Endothelial cell of umbilical vein (primary cell): ENCODE measurements at regions of chr6 and their contacts with region 1.

Region 1: DNA sequence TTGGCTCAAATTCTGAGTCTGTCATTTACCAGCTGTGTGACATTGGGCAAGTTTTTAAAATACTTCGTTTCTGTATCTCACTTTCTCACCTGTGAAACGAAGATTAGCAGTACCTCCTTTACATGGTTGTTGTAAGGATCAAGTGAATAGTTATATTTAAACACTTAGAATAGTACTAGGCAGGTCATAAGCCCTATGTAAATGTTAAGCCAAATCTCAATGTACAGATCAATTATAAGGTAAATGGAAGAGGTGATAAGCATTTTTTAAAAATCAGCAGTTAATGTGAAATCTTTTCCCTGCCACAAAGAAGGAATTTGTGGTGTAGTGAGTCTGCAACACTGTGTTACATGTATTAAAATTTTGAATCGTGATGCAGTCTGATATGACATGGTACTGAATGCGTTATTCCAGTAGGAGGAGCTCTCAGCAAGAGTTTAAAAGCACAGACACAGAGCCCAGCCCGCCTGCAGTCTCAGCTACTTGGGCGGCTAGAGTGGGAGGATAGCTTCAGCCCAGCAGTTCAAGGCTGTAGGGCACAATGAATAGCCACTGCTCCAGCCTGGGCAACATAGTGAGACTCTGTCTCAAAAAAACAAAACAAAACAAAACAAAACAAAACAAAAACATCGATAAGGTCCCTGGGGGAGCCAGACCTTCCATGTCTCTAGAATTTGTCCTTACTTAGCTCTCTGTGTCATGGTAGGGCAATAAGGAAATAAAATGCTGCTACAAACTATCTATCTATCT is 46.0 kb downstream of the GTF2H5 start:
- DNase-seq: peak; percentile 80
- H3K4me3 ChIP-seq: no peak overlapping the region
- H3K27ac ChIP-seq: no peak overlapping the region
- H3K4me1 ChIP-seq: peaks cover 8% of the 10 kb centered on the region
- H3K27me3 ChIP-seq: no peaks in the 10 kb centered on the region
- CTCF ChIP-seq: peak; percentile 66 to 76
- POLR2A ChIP-seq: no peak

Region 2: GRCh38 chr6:158518191-158519127 is 304.4 kb after region 1 on chr6:
- CTCF ChIA-PET with region 1: interaction called, 18 read pairs
- POLR2A ChIA-PET with region 1: no interaction called
- dilution Hi-C with region 1: no loop called
- intact Hi-C with region 1: no loop called
- DNase-seq: peak; percentile 71
- H3K4me3 ChIP-seq: peak overlapping the region in 2 of 3 experiments; percentile 17 to 23
- H3K27ac ChIP-seq: no peak overlapping the region
- H3K4me1 ChIP-seq: peaks cover 15% of the 10 kb centered on the region
- H3K27me3 ChIP-seq: no peaks in the 10 kb centered on the region
- CTCF ChIP-seq: peak; percentile 51 to 54
- POLR2A ChIP-seq: no peak

Region 3: GRCh38 chr6:158605266-158605878 is 391.3 kb after region 1 on chr6:
- CTCF ChIA-PET with region 1: interaction called, 154 read pairs
- POLR2A ChIA-PET with region 1: interaction called, 6 read pairs
- dilution Hi-C with region 1: no loop called
- intact Hi-C with region 1: loop called (anchors 1 kb)
- DNase-seq: peak; percentile 85
- H3K4me3 ChIP-seq: no peak overlapping the region
- H3K27ac ChIP-seq: no peak overlapping the region
- H3K4me1 ChIP-seq: no peaks in the 10 kb centered on the region
- H3K27me3 ChIP-seq: no peaks in the 10 kb centered on the region
- CTCF ChIP-seq: peak; percentile 68 to 72
- POLR2A ChIP-seq: no peak

Region 4: GRCh38 chr6:158686791-158687381 is 472.8 kb after region 1 on chr6:
- CTCF ChIA-PET with region 1: interaction called, 194 read pairs
- POLR2A ChIA-PET with region 1: no interaction called
- dilution Hi-C with region 1: no loop called
- intact Hi-C with region 1: loop called (anchors 1 kb)
- DNase-seq: no peak
- H3K4me3 ChIP-seq: no peak overlapping the region
- H3K27ac ChIP-seq: no peak overlapping the region
- H3K4me1 ChIP-seq: peaks cover 3% of the 10 kb centered on the region
- H3K27me3 ChIP-seq: peaks cover 0 to 2% of the 10 kb centered on the region in 2 experiments
- CTCF ChIP-seq: no peak
- POLR2A ChIP-seq: no peak